ENCODE measurements at regions of chr4 and their contacts with region 1.

Region 1: DNA sequence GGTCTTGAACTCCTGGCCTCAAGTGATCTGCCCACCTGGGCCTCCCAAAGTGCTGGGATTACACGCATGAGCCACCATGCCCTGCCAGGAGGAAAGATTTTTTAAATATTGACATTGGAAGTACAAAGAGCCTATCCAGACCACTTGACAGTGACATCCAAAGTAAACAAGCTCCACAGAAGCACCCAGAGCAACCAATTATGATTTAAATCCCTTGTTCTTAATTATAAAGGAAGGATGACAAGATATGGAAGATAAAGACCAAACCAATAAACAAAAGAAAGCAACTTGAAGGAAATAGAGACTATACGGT is 27.7 kb upstream of the RPL34 start:
- DNase-seq: no peak
- H3K4me3 ChIP-seq: no peak overlapping the region
- H3K27ac ChIP-seq: no peak overlapping the region
- H3K4me1 ChIP-seq: peaks cover 12% of the 10 kb centered on the region
- H3K27me3 ChIP-seq: no peaks in the 10 kb centered on the region
- CTCF ChIP-seq: no peak

Region 2: DNA sequence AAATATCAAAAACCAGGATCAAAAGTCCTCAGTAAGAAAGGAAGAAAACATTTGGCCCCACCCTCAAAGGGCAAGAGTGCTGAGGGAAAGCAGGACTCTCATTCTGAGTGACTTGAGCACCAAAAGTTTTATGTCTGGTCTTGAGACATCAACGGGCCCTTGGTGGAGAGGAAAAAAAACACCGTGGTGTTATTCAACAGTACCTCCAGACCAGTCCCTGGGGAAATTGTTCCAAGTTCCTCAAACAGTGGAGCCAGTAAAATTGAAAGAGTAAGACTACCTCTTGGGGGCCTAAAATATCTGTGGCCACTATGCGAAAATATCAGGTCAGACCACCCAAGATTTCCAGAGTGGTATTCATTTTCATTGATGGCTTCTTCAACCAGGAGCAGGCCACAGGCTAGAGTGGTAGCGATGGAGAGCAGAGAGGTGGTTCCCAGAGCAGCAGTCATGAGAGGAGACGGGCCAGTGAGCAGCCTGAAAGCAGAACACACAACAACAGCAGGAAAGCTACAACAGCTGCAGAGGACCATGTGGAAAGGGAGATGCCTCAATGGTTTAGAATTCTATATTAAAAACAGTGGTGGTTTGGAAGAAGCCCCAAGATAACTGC is 35.9 kb before region 1 on chr4:
- CTCF ChIA-PET with region 1: no interaction called
- POLR2A ChIA-PET with region 1: interaction called, 14 read pairs
- intact Hi-C with region 1: no loop called
- DNase-seq: no peak
- H3K4me3 ChIP-seq: no peak overlapping the region
- H3K27ac ChIP-seq: no peak overlapping the region
- H3K4me1 ChIP-seq: no peaks in the 10 kb centered on the region
- H3K27me3 ChIP-seq: no peaks in the 10 kb centered on the region
- CTCF ChIP-seq: no peak